ENCODE measurements at regions of chr6 and their contacts with region 1.

Region 1: GRCh38 chr6:161418463-161418945 is 144.6 kb upstream of the AGPAT4 start:
- DNase-seq: peak; percentile 48
- CTCF ChIP-seq: peak; percentile 78

Region 2: DNA sequence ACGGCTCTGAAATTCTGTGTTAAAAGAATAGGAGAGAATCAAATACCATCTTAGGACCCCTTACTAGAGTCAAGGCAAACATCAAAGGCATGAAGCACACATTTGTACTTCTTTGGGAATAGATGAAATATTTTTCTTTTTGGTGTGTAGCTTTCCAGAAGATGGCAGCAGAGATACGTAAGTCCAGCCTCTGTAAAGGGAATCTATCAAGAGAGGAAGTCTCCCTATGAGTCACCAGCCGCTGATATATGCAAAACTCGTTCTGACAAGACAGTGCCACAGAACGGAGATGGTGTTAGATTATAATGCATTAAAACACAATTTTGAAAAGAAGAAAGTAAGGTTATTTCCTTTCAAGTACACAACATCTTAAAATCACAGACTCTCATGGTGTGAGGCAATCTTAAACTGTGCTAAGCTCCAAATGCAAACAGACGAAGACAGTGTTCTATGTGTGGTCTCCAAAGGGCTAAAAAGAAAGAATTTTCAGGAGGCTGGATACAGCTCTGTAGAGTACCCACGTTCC is 24.6 kb before region 1 on chr6:
- CTCF ChIA-PET with region 1: interaction called, 22 read pairs
- POLR2A ChIA-PET with region 1: no interaction called
- DNase-seq: peak; percentile 78
- CTCF ChIP-seq: peak; percentile 52

Region 3: GRCh38 chr6:161406646-161407045 is 11.9 kb before region 1 on chr6:
- CTCF ChIA-PET with region 1: interaction called, 16 read pairs
- POLR2A ChIA-PET with region 1: no interaction called
- DNase-seq: no peak
- CTCF ChIP-seq: no peak

Region 4: GRCh38 chr6:161429921-161430490 is 11.5 kb after region 1 on chr6:
- CTCF ChIA-PET with region 1: interaction called, 21 read pairs
- POLR2A ChIA-PET with region 1: no interaction called
- DNase-seq: no peak
- CTCF ChIP-seq: no peak

Region 5: GRCh38 chr6:161439093-161439492 is 20.6 kb after region 1 on chr6:
- CTCF ChIA-PET with region 1: interaction called, 29 read pairs
- POLR2A ChIA-PET with region 1: no interaction called
- DNase-seq: no peak
- CTCF ChIP-seq: no peak

Region 6: GRCh38 chr6:161444464-161444863 is 26.0 kb after region 1 on chr6:
- CTCF ChIA-PET with region 1: interaction called, 29 read pairs
- POLR2A ChIA-PET with region 1: no interaction called
- DNase-seq: no peak
- CTCF ChIP-seq: no peak

Region 7: DNA sequence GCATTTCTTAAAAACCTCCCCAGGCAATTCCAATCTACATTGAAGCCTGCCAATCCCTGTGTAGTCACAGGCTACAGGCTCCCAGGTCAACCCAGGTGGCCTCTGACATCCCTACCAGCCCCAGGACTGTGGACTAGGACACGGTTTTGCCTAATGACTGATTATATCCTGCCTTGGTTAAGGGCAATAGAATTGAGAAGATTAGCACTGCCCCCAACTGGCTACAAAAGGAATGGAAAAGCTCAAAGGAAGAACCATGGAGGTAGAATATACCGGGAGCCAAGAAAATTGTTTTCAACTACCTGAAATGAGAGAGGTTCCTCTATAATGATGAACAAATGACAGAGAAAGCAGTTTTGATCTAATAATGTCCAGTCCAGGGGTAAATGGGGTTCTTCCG is 276.5 kb after region 1 on chr6:
- CTCF ChIA-PET with region 1: interaction called, 24 read pairs
- POLR2A ChIA-PET with region 1: no interaction called
- DNase-seq: no peak
- CTCF ChIP-seq: peak; percentile 45

Region 8: GRCh38 chr6:161802231-161802630 is 383.7 kb after region 1 on chr6:
- CTCF ChIA-PET with region 1: no interaction called
- POLR2A ChIA-PET with region 1: no interaction called
- DNase-seq: no peak
- CTCF ChIP-seq: no peak

Measured in GM10248 (cell line).